ENCODE measurements at regions of chr19 and their contacts with region 1.

Region 1: DNA sequence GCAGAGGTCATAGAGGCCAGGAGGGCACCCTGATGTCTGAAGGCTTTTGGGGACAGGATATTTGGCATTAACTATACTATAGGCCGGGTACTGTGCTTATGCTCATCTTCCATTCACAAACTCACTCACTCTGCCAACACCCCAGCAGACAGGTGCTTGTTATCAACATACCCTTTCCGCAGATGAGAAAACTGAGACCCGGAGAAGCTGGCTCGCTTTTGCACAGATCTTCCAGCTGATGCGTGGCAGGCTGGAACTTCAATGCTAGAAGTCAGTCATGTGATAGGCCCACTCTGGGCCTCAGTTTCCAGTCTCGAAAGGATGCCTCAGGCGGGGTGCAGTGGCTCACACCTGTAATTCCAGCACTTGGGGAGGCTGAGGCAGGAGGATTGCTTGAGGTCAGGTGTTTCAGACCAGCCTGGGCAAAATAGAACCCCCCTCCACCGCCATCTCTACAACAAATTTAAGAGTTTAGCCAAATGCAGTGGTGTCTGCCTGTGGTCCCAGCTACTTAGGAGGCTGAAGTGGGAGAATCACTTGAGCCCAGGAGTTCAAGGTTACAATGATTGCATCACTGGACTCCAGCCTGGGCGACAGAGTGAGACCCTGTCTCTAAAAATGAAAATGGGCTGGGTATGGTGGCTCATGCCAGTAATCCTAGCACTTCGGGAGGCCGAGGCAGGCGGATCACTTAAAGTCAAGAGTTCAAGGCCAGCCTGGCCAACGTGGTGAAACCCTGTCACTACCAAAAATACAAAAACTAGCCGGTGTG is 9.5 kb downstream of the CNN1 start:
- DNase-seq: no peak

Region 2: DNA sequence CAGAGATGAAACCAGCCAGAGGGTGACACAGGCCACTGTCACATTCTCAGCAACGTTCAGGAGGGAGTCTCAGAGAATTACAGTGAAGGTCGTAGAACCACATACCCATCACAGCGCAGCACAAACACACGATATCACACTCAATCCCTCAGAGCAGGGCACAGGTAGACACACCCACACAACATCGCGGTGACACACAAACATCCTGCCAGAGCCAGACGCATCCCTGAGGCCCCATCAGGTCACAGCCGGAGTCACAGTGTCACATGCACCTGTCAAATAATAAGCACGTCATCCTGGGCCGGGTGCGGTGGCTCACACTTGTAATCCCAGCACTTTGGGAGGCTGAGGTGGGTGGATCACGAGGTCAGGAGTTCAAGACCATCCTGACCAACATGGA is 84.7 kb before region 1 on chr19:
- intact Hi-C with region 1: loop called in 1 of 2 experiments (anchors 2 kb)
- DNase-seq: no peak

Measured in posterior vena cava (tissue), 2 donors.